CD4-positive, alpha-beta T cell (primary cell): ENCODE measurements at regions of chr3 and their contacts with region 1.

Region 1: GRCh38 chr3:107938143-107938542 is 152.7 kb downstream of the CD47 start:
- DNase-seq: peak in 4 of 14 experiments; percentile 30 to 45 (median 35)
- ATAC-seq: no peak
- H3K4me3 ChIP-seq: no peak overlapping the region
- H3K4me3 Mint-ChIP-seq: no peak overlapping the region
- H3K27ac ChIP-seq: no peak overlapping the region
- H3K27ac Mint-ChIP-seq: no peak overlapping the region
- H3K4me1 ChIP-seq: peaks cover 3% of the 10 kb centered on the region
- H3K4me1 Mint-ChIP-seq: peaks cover 10% of the 10 kb centered on the region
- H3K27me3 ChIP-seq: no peaks in the 10 kb centered on the region
- H3K27me3 Mint-ChIP-seq: no peaks in the 10 kb centered on the region
- CTCF ChIP-seq: peak; percentile 51

Region 2: DNA sequence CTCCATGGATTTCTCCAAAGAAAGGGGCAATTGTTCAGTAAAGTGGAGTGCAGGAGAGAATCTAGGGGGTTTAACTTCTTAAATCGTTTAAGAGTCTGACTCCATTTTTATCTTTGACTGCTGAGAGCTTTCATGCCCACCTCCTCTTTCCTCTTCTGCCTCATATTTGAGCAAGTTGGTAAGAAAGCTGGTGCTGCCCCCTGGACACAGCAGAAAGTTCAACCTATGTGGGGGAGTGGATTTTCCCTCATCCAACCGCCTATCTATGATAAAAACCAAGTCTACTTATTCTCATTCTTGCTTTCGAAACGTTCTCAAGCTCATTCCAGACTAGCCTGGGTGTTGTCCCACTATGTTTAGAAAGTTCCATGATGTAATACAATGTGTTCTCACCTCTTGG is 384.2 kb after region 1 on chr3:
- CTCF ChIA-PET with region 1: no interaction called
- POLR2A ChIA-PET with region 1: no interaction called
- intact Hi-C with region 1: loop called in 1 of 2 experiments (anchors 5 kb)
- DNase-seq: peak in 12 of 14 experiments; percentile 6 to 65 (median 13)
- ATAC-seq: peak; percentile 44
- H3K4me3 ChIP-seq: no peak overlapping the region
- H3K4me3 Mint-ChIP-seq: no peak overlapping the region
- H3K27ac ChIP-seq: no peak overlapping the region
- H3K27ac Mint-ChIP-seq: no peak overlapping the region
- H3K4me1 ChIP-seq: no peaks in the 10 kb centered on the region
- H3K4me1 Mint-ChIP-seq: no peaks in the 10 kb centered on the region
- H3K27me3 ChIP-seq: no peaks in the 10 kb centered on the region
- H3K27me3 Mint-ChIP-seq: no peaks in the 10 kb centered on the region
- CTCF ChIP-seq: no peak

Region 3: DNA sequence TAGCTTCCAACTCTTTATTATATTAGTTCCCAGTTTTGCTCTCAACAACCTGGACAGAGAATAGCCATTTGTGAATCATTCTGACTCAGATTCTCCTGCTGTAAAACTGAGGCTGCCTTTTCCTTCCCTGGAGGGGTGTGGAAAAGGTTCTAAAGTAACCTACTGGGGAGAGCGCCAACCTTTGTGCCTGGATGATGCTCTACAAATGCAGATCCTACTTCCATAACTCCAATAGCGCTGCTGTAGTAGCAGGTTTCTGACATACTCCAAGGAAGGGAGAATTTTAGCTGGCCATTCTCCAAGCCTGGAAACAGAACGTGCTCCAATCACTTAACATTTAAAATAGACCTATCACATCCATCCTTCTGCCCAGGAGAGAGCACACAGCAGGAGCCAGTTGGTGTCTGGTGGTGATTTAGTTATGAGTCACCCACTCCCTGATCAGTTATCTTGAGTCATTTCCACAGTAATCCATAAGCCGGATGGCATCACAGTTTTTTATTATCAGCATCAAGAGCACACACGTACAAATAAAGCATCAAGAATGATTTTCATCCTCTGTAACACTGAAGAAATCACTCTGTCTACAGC is 534.0 kb after region 1 on chr3:
- CTCF ChIA-PET with region 1: no interaction called
- POLR2A ChIA-PET with region 1: no interaction called
- intact Hi-C with region 1: loop called in 1 of 2 experiments (anchors 5 kb)
- DNase-seq: no peak
- ATAC-seq: no peak
- H3K4me3 ChIP-seq: no peak overlapping the region
- H3K4me3 Mint-ChIP-seq: no peak overlapping the region
- H3K27ac ChIP-seq: no peak overlapping the region
- H3K27ac Mint-ChIP-seq: no peak overlapping the region
- H3K4me1 ChIP-seq: no peaks in the 10 kb centered on the region
- H3K4me1 Mint-ChIP-seq: no peaks in the 10 kb centered on the region
- H3K27me3 ChIP-seq: no peaks in the 10 kb centered on the region
- H3K27me3 Mint-ChIP-seq: no peaks in the 10 kb centered on the region
- CTCF ChIP-seq: no peak

Region 4: GRCh38 chr3:108552267-108553159 is 614.4 kb after region 1 on chr3:
- CTCF ChIA-PET with region 1: no interaction called
- POLR2A ChIA-PET with region 1: no interaction called
- intact Hi-C with region 1: loop called in 1 of 2 experiments (anchors 10 kb)
- DNase-seq: peak in 4 of 14 experiments; percentile 9 to 68 (median 62)
- ATAC-seq: no peak
- H3K4me3 ChIP-seq: no peak overlapping the region
- H3K4me3 Mint-ChIP-seq: no peak overlapping the region
- H3K27ac ChIP-seq: no peak overlapping the region
- H3K27ac Mint-ChIP-seq: no peak overlapping the region
- H3K4me1 ChIP-seq: no peaks in the 10 kb centered on the region
- H3K4me1 Mint-ChIP-seq: no peaks in the 10 kb centered on the region
- H3K27me3 ChIP-seq: no peaks in the 10 kb centered on the region
- H3K27me3 Mint-ChIP-seq: no peaks in the 10 kb centered on the region
- CTCF ChIP-seq: peak; percentile 62